ENCODE measurements at regions of chr2 and their contacts with region 1.

Region 1: GRCh38 chr2:219294356-219295351 is 14.5 kb downstream of the PTPRN start:
- DNase-seq: peak; percentile 90
- ATAC-seq: peak; percentile 82
- H3K4me3 Mint-ChIP-seq: peak overlapping the region; percentile 88
- H3K27ac Mint-ChIP-seq: peak overlapping the region; percentile 7; the same call in 1 of the 2 replicates
- H3K4me1 Mint-ChIP-seq: peaks cover 21% of the 10 kb centered on the region
- H3K27me3 Mint-ChIP-seq: peaks cover 64% of the 10 kb centered on the region
- CTCF ChIP-seq: peak; percentile 96

Region 2: DNA sequence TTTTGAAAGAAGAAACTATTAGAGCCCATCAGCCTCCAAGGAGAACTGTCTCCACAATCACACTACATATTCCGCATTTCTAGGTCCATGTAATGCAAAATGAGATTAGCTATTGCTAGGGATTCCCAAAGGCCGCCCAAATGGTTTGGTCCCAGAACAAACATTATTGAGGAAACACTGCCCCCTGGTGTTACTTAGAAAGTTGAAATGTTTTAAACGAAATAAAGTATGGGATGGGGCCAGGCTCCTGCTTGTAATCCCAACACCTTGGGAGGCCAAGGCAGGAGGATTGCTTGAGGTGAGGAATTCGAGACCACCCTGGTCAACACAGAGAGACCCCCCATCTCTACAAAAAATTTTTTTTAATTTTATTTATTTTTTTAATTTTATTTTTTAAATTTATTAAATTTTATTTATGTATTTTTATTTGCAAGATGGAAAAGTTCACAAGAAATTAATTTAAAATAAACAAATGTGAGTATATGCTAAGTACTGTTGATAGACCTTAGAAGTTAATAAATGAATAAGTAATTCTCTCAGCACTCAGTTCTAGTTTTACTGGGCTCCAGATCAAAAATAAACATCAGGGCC is 139.5 kb before region 1 on chr2:
- CTCF ChIA-PET with region 1: interaction called, 12 read pairs
- POLR2A ChIA-PET with region 1: no interaction called
- DNase-seq: peak; percentile 24
- ATAC-seq: peak; percentile 40
- H3K4me3 Mint-ChIP-seq: no peak overlapping the region
- H3K27ac Mint-ChIP-seq: no peak overlapping the region
- H3K4me1 Mint-ChIP-seq: peaks cover 10% of the 10 kb centered on the region
- H3K27me3 Mint-ChIP-seq: no peaks in the 10 kb centered on the region
- CTCF ChIP-seq: peak; percentile 53

Region 3: GRCh38 chr2:219176818-219177551 is 117.7 kb before region 1 on chr2 and contains the start of gene CNPPD1:
- CTCF ChIA-PET with region 1: interaction called, 18 read pairs
- POLR2A ChIA-PET with region 1: interaction called, 3 read pairs
- DNase-seq: peak; percentile 76
- ATAC-seq: peak; percentile 55
- H3K4me3 Mint-ChIP-seq: peak within 1 kb of the TSS; percentile 88
- H3K27ac Mint-ChIP-seq: peak within 1 kb of the TSS; percentile 98
- H3K4me1 Mint-ChIP-seq: peaks cover 19% of the 10 kb centered on the region
- H3K27me3 Mint-ChIP-seq: no peaks in the 10 kb centered on the region
- CTCF ChIP-seq: no peak
- total RNA-seq, gene CNPPD1: 26.7 to 32.8 TPM (median 29.5 TPM) in 3 replicates

Region 4: GRCh38 chr2:219245148-219245898 is 49.3 kb before region 1 on chr2 and contains the starts of genes GLB1L and STK16:
- CTCF ChIA-PET with region 1: interaction called, 23 read pairs
- POLR2A ChIA-PET with region 1: interaction called, 9 read pairs
- DNase-seq: peak; percentile 96
- ATAC-seq: peak; percentile 84
- H3K4me3 Mint-ChIP-seq: peak within 1 kb of the TSS; percentile 93
- H3K27ac Mint-ChIP-seq: peak within 1 kb of the TSS; percentile 96
- H3K4me1 Mint-ChIP-seq: peaks cover 22% of the 10 kb centered on the region
- H3K27me3 Mint-ChIP-seq: no peaks in the 10 kb centered on the region
- CTCF ChIP-seq: no peak
- total RNA-seq, gene GLB1L: 5.2 to 6.4 TPM (median 6.1 TPM) in 3 replicates
- total RNA-seq, gene STK16: 27.4 to 28.8 TPM (median 27.5 TPM) in 3 replicates

Region 5: DNA sequence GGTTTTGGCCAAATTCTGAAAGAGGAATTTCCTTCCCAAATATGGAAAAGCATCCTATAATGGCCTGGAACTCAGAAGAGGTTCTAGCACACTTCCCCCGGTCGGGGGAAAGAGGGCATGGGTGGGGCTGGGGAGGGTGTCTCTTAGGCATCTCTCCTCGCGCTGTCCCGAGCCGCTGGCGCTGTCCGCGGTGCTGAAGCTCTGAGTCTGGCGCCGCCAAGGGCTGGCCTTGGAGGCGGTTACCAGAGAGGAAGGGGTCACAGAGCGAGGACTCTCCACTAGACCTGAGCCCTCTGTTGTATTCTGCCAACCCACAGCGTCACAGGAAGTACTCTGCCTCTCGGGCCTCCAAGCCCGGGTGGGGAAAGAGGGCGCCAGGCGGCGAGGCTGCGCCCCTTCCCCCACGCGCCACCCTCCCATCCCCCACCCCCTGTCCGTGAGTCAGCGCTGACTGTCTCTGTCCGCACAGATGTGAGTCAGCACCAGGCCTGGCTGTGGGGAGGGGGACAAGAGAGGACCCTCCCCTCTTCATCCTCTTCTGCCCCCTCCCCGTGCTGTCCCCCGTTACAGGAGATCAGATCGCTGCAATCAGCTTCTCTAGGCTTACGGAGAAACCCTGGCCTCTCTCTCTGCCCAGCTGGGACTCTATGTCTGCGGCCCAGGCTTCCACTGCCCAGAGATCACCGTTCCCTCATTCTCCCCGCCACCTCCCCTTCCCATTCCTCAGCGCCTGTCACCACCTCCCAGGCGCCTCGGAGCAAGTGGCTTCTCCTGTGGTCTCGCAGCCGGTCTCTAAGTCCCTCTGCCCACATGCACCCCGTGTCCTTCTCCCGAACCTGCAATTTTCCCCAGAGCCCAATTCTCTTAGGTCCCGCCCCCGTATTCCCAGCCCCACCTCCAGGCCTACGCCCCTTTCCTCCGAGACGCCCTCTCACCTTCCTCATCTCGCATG is 13.8 kb after region 1 on chr2:
- CTCF ChIA-PET with region 1: interaction called, 19 read pairs
- POLR2A ChIA-PET with region 1: no interaction called
- DNase-seq: peak; percentile 94
- ATAC-seq: peak; percentile 75
- H3K4me3 Mint-ChIP-seq: peak overlapping the region; percentile 85
- H3K27ac Mint-ChIP-seq: no peak overlapping the region
- H3K4me1 Mint-ChIP-seq: peaks cover 22% of the 10 kb centered on the region
- H3K27me3 Mint-ChIP-seq: peaks cover 63% of the 10 kb centered on the region
- CTCF ChIP-seq: no peak

Region 6: DNA sequence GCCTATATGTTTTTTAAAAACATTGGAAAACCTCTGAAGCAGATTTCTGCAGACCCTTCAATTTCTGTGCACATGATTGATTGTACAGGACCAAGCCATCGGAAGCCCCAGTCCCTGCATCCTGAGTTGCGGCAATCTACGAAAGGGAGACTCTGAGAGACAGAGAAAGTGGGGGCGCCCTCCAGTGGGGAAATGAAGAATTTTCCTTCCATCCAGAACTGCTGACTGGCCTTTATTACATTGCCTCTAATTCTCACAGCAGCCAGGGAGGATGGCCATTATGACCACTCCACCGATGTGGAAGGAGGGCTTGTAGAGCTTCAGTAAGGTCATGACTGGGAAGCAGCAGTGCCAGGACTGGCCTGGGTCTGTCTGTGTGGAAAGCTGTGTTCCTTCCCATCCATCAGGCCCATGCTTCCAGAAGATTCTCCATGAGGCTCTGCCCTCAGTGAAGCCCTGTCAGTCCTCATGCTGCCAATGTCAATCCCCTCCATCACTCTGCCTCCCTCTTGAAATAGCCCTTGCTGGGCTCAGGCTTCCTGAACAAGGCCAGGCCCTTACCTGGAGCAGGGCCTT is 57.9 kb after region 1 on chr2:
- CTCF ChIA-PET with region 1: interaction called, 12 read pairs
- POLR2A ChIA-PET with region 1: no interaction called
- DNase-seq: peak; percentile 88
- ATAC-seq: peak; percentile 89
- H3K4me3 Mint-ChIP-seq: no peak overlapping the region
- H3K27ac Mint-ChIP-seq: no peak overlapping the region
- H3K4me1 Mint-ChIP-seq: no peaks in the 10 kb centered on the region
- H3K27me3 Mint-ChIP-seq: peaks cover 53% of the 10 kb centered on the region
- CTCF ChIP-seq: peak; percentile 85